B cell (primary cell): ENCODE measurements at regions of chr19 and their contacts with region 1.

Region 1: GRCh38 chr19:1429750-1430149 is 8.4 kb upstream of the RPS15 start:
- DNase-seq: no peak
- ATAC-seq: no peak
- H3K4me3 ChIP-seq: no peak overlapping the region
- H3K4me3 Mint-ChIP-seq: no peak overlapping the region
- H3K27ac ChIP-seq: no peak overlapping the region
- H3K27ac Mint-ChIP-seq: no peak overlapping the region
- H3K4me1 ChIP-seq: no peaks in the 10 kb centered on the region
- H3K4me1 Mint-ChIP-seq: no peaks in the 10 kb centered on the region
- H3K27me3 ChIP-seq: no peaks in the 10 kb centered on the region
- H3K27me3 Mint-ChIP-seq: no peaks in the 10 kb centered on the region
- CTCF ChIP-seq: no peak

Region 2: DNA sequence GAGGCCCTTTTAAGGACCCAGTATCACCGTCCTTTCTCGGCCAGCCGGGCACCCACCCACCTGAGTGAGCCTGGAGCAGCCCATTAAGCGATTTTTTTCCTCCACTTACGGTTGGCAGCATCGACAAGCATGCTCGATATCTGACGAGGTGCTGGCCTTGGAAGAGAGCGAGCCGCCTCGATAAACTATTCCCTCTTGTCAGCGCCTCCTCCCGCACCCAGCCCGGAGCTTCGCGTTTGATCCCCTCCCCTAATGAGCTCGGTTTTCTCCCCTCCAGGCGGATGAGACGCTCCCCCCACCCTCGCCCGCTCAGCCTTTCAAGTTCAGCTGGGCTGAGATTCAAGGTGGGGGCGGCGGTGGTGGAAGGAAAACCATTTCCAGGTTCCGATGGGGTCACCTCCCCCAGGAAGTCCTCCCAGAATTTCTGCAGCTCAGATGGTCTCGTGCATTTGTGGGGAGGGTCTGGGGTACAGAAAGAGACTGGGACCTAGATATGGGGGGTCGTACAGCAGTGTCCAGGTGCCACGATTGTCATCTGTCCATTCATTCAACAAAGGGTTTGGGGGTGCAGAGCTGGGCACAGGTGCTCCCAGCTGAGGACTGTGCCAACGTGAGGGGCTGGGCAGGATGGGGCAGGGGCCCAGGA is 304.7 kb after region 1 on chr19:
- CTCF ChIA-PET with region 1: no interaction called
- POLR2A ChIA-PET with region 1: interaction called, 10 read pairs
- intact Hi-C with region 1: no loop called
- DNase-seq: no peak
- ATAC-seq: no peak
- H3K4me3 ChIP-seq: no peak overlapping the region
- H3K4me3 Mint-ChIP-seq: no peak overlapping the region
- H3K27ac ChIP-seq: no peak overlapping the region
- H3K27ac Mint-ChIP-seq: no peak overlapping the region
- H3K4me1 ChIP-seq: no peaks in the 10 kb centered on the region
- H3K4me1 Mint-ChIP-seq: no peaks in the 10 kb centered on the region
- H3K27me3 ChIP-seq: peaks cover 0 to 48% (median 11%) of the 10 kb centered on the region in 4 experiments
- H3K27me3 Mint-ChIP-seq: peaks cover 37% of the 10 kb centered on the region
- CTCF ChIP-seq: no peak